ENCODE measurements at regions of chr1 and their contacts with region 1.

Region 1: DNA sequence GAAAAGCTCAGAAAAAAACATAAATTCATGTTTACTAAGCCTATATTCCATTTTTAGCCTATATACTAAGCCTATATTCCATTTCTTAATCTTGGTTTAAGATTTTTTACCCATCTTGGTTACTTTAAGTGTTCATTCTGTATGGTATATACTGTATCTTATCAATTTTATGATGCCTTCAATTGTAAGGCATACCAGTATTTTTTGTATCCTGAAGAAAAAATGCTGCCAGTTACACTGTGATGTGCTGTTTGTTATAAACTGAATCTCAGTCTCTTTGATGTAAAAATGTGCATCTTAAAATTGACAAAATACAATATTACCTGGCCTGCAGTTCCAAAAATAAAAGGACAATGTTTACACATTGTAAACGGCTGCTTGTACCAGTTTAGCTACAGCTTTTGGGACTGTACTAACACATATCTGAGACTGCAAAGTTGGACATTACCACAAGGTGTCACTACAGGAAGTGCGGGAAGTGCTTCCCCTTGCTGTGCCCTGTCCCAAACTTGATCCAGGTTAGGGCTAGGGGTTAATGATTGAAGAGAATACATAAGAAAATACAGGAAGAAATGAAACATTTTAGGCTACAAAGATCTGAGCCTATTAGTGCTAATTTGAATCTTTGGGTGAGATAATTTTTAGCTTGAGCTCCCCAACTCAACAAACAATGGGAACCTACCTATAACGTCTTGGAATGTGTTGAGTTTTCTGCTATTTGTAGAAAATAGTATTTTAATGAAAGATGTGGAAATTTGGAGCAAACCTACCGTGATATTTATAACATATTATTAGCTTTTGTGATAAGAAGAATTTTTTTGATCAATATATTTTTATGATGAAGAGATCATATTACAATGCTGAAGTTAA is 108.9 kb downstream of the LBR start:
- DNase-seq: peak; percentile 82

Region 2: DNA sequence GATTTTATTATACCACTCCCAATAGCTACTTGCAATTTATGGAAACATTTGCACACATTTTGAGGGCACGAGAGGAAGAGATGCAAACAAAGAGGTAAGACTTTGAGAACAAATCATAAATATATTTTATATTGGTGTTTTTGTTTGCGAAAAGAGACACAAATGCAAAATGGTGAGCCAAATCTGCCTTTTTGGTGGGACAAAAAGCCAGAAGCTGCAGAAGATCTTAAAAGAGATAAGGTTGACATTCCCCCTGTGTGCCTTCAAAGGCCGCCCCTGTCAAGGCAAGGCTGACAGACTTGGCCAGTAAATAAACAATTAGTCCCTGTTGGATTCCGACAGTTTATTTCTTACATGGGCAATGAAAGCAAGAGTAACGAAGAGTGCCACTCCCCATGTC is 13.9 kb before region 1 on chr1:
- CTCF ChIA-PET with region 1: interaction called, 23 read pairs
- POLR2A ChIA-PET with region 1: no interaction called
- DNase-seq: no peak

Region 3: DNA sequence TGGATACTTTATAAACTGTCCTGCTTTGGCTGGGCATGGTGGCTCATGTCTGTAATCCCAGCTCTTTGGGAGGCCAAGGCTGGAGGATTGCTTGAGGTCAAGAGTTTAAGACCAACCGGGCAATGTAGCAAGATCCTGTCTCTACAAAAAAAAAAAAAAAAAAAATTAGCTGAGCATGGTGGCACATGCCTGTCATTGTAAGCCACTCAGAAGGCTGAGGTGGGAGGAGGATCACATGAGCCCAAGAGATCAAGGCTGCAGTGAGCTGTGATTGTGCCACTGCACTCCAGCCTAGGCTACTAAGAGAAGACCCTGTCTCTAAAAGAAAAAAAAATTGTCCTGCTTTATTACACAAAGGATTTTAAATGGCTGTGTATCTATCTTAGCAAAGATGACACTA is 13.7 kb after region 1 on chr1:
- CTCF ChIA-PET with region 1: interaction called, 16 read pairs
- POLR2A ChIA-PET with region 1: no interaction called
- DNase-seq: no peak

Region 4: DNA sequence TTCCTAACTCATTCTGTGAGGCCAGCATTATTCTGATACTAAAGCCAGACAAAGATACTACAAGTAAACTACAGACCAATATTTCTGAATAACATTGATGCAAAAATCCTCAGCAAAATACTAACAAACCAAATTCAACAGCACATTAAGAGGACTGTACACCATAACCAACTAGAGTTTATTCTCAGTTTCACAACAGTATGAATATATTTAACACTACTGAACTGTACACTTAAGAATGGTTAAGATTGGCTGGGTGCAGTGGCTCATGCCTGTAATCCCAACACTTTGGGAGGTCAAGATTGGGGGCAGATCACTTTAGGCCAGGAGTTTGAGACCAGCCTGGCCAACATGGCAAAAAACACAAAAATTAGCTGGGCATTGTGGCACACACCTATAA is 31.9 kb after region 1 on chr1:
- CTCF ChIA-PET with region 1: no interaction called
- POLR2A ChIA-PET with region 1: no interaction called
- DNase-seq: no peak

Region 5: GRCh38 chr1:225388372-225388771 is 69.4 kb after region 1 on chr1:
- CTCF ChIA-PET with region 1: interaction called, 10 read pairs
- POLR2A ChIA-PET with region 1: no interaction called
- DNase-seq: no peak